HAP-1 (cell line): ENCODE measurements at regions of chr15 and their contacts with region 1.

Region 1: DNA sequence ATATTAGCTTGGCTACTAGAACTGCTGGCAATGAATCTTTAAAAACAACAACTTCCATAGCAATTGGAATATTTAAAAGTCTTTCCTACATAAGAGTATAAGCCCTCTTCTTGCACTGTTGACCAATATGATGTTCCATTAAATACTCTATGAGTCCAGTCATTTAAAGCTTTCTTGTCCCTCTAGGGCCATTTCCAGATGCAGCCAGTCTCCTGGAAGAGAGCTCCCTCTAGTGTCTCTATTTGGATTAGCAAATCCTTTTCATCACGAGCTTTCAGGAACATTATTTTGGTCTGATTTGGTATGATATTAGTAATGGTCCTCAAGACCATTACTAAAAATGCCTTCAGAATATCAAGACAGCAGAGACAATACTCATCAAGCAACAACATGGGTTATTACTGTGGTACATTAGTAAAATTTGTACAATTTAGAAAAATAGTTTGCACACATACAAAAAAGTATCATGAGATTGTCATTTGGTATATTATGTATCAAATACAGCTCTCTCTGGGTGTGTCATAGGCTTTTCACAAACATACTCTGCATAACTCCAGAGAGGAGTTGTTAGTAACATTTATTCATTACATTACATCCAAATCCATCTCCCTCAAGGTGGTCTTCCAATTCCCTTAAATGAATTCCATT is 101.3 kb downstream of the DPH6 start:
- DNase-seq: peak; percentile 24 to 33
- H3K4me3 ChIP-seq: no peak overlapping the region
- H3K4me1 ChIP-seq: no peaks in the 10 kb centered on the region
- H3K27me3 ChIP-seq: no peaks in the 10 kb centered on the region

Region 2: DNA sequence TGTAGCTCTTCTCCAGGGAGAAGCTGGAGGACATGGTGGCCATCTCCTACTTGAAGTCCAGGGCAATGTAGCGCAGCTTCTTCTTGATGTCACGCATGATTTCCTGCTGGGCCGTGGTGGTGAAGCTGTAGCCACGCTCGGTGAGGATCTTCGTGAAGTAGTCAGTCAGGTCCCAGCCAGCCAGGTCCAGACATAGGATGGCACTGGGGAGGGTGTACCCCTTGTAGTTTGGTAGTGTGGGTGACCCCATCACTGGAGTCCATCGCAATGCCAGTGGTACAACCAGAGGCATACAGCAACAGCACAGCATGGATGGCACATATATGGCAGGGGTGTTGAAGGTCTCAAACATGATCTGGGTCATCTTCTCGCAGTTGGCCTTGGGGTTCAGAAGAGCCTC is 1070.7 kb before region 1 on chr15:
- in situ Hi-C with region 1: no loop called
- DNase-seq: no peak
- H3K4me3 ChIP-seq: no peak overlapping the region
- H3K4me1 ChIP-seq: peaks cover 11% of the 10 kb centered on the region
- H3K27me3 ChIP-seq: no peaks in the 10 kb centered on the region

Region 3: DNA sequence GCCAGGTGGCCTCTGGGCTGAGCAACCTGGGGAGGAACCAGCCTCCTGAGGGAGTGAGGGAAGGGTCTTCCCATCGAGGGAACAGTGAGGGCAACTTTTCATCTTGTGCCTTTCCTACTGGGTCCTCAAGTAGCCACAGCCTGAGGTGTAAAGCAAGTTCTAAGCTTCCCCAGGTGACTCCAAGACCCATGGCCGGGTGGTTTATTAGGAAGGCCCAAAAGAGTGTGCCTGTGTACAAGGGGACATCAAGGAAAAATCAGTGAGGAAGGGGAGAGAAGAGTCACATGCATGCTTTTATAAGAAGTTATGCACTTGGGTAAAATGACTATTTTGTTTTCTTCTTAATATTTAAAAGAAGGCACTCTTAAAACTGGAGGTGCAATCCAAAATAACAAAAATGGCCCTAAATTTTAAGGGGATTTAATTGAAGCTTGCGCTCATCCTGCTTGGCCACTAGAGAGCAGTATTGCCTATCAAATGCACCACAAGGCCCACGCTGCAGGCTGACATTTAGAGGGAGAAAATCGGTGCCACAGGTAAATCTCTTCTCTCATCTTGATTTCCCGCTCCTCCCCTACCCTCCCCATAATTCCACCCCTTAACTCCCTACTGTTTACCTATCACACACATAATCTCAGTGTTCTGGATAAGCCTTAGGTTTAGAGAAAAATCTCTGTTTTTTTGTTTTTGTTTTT is 366.3 kb before region 1 on chr15:
- in situ Hi-C with region 1: loop called (anchors 10 kb)
- DNase-seq: peak; percentile 61 to 75
- H3K4me3 ChIP-seq: no peak overlapping the region
- H3K4me1 ChIP-seq: no peaks in the 10 kb centered on the region
- H3K27me3 ChIP-seq: no peaks in the 10 kb centered on the region

Region 4: DNA sequence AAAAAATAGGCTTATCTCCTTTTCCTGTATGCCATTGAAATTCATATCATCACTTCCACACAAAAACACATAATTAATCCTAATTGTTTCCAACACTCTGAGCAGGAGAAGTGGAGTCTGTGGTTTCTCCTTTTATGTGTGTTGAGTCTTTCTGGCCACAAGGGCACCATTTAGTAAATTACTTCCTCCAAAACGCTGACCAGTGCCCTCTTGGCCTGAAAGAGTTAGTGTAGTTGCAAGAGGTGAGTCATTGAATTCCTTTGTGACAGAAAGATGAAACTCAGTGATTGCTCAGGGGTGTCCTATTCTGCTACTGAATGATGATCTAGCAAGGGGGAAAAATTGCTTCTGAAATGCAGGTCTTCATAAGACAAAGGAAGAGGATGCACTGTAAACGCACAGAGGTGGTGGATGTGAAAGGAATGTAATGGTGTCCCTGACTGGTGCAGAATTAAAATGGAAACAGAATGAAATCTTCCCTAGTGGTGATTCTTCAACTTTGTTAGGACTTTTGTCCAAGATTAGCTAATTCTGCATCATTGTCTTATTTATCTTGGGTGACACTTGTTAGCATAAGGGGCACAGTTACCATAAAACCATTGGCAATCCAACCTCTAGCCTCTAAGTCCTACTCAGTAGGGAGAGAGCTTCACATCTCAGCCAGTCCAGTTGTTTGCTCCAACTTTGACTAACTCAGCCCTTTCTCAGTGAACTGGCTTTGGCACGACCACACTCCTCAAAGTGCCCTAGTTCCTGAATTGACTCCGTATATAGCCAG is 151.1 kb before region 1 on chr15:
- in situ Hi-C with region 1: loop called (anchors 10 kb)
- DNase-seq: peak in 1 of 2 experiments; percentile 7
- H3K4me3 ChIP-seq: no peak overlapping the region
- H3K4me1 ChIP-seq: peaks cover 1% of the 10 kb centered on the region; the same call in 1 of the 2 replicates
- H3K27me3 ChIP-seq: no peaks in the 10 kb centered on the region

Region 5: GRCh38 chr15:35545824-35546510 is 101.3 kb after region 1 on chr15 and contains the start of gene DPH6:
- in situ Hi-C with region 1: no loop called
- DNase-seq: peak; percentile 81 to 85
- H3K4me3 ChIP-seq: peak within 1 kb of the TSS; percentile 64
- H3K4me1 ChIP-seq: peaks cover 34% of the 10 kb centered on the region
- H3K27me3 ChIP-seq: no peaks in the 10 kb centered on the region

Region 6: DNA sequence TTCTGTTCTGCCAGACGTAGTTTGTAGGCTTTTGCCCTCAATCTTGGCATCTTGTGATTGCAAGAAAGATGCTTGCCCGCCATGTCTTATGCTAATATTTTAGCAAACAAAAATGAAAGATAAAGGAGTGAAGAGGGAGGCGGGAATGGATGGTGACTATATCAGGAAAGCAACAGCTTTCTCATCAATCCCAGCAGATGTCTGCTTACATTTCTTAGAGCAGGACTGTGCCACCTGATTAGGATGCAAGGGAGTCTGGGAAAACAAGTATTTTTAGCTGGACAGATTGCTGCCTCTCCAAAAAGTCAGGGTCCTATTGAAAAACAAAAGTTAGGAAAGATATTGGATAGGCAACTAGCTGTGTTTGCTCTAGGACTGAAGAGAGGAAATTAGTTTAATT is 135.9 kb after region 1 on chr15:
- in situ Hi-C with region 1: no loop called
- DNase-seq: no peak
- H3K4me3 ChIP-seq: no peak overlapping the region
- H3K4me1 ChIP-seq: peaks cover 3% of the 10 kb centered on the region
- H3K27me3 ChIP-seq: no peaks in the 10 kb centered on the region